PC-3 (cell line): ENCODE measurements at regions of chr1 and their contacts with region 1.

Region 1: DNA sequence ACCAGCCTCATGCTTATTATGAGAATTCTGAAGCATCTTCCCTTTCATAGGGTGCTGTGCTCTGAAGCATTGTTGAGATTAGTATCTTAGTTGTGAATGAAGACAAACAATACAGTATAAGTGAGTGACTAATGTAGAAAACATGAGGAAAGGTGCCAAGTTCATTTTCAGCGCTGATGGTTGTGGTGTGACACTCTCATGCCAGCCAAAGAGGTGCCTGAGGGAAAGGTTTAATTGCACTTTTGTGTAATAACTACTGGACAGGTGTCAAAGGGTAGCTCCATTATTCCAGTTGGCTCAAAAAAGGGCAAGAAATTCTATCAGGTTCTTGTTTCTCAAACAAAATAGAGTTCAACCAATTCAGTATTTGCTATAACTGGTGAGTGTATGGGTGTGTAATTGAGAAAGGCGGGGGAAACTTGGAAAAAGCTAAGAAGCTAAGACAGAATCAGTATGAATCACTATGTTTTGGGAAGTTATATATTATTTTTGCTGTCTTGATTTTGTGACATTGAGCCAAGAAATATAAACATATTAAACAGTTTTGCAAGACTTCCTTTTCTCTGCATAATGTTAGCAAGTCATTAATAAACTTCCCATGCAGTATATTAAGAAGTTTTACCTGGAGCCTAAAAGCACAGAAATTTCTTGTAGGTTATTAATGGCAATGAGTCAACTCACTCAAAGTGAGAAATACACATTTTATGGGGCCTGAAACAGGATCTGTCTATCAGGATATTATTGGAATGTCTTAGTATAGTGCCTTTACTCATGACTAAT is 31.8 kb downstream of the KCNK2 start:
- DNase-seq: peak; percentile 98
- ATAC-seq: peak; percentile 84
- H3K4me3 ChIP-seq: peak overlapping the region; percentile 20; the same call in 1 of the 2 replicates
- H3K27ac ChIP-seq: peak overlapping the region; percentile 74
- H3K4me1 ChIP-seq: peaks cover 25% of the 10 kb centered on the region
- H3K27me3 ChIP-seq: no peaks in the 10 kb centered on the region
- CTCF ChIP-seq: no peak

Region 2: GRCh38 chr1:214823311-214824117 is 290.8 kb before region 1 on chr1:
- CTCF ChIA-PET with region 1: no interaction called
- POLR2A ChIA-PET with region 1: no interaction called
- intact Hi-C with region 1: loop called (anchors 1 kb)
- DNase-seq: no peak
- ATAC-seq: no peak
- H3K4me3 ChIP-seq: no peak overlapping the region
- H3K27ac ChIP-seq: no peak overlapping the region
- H3K4me1 ChIP-seq: peaks cover 7% of the 10 kb centered on the region; the same call in 1 of the 2 replicates
- H3K27me3 ChIP-seq: no peaks in the 10 kb centered on the region
- CTCF ChIP-seq: peak; percentile 41; the same call in 1 of the 2 replicates

Region 3: DNA sequence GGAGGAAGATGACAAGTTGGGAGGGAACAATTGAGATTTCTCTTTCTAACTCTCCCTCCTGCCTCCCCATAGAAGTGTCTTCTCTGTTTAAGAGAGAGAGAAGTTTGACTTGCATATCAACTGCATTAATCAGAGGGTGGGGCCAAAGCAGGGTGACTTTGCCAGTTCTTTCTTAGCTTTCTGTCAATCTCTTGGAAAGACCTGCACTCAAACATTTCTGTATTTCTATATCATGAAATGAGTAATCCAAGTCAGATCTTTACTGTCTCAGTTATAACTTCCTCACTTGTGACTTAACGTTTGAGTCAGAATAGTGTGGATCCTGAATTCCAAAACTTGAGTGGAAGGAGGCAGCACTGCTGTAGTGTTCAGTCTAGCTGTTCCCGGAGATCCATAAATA is 212.6 kb before region 1 on chr1:
- CTCF ChIA-PET with region 1: no interaction called
- POLR2A ChIA-PET with region 1: no interaction called
- intact Hi-C with region 1: loop called (anchors 1 kb)
- DNase-seq: peak; percentile 99
- ATAC-seq: peak; percentile 85
- H3K4me3 ChIP-seq: peak overlapping the region; percentile 48
- H3K27ac ChIP-seq: peak overlapping the region; percentile 88
- H3K4me1 ChIP-seq: peaks cover 44% of the 10 kb centered on the region
- H3K27me3 ChIP-seq: no peaks in the 10 kb centered on the region
- CTCF ChIP-seq: no peak; the same call in 1 of the 2 replicates

Region 4: GRCh38 chr1:215076318-215076717 is 38.0 kb before region 1 on chr1:
- CTCF ChIA-PET with region 1: no interaction called
- POLR2A ChIA-PET with region 1: no interaction called
- intact Hi-C with region 1: no loop called
- DNase-seq: peak; percentile 80
- ATAC-seq: peak; percentile 96
- H3K4me3 ChIP-seq: no peak overlapping the region
- H3K27ac ChIP-seq: no peak overlapping the region
- H3K4me1 ChIP-seq: no peaks in the 10 kb centered on the region
- H3K27me3 ChIP-seq: no peaks in the 10 kb centered on the region
- CTCF ChIP-seq: peak; percentile 91

Region 5: DNA sequence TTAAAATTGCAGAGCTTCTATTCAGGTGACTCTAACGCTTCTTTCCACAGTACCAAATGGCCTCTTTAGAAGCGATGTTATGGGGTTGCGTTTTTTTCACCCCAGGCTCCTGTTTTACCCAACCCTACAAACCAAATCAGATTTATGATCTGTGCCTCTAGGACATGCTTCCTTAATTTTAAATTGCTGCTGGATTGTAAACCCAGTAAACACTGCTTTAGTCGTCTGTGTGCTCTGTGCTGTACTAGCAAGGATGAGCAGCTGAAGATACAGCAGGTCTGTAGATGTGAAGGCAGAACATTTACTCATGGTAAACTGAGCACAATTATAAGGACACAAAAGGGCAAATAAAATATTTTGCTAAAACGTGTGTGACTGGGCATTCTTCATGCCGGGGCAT is 18.8 kb before region 1 on chr1:
- CTCF ChIA-PET with region 1: no interaction called
- POLR2A ChIA-PET with region 1: no interaction called
- intact Hi-C with region 1: no loop called
- DNase-seq: no peak
- ATAC-seq: no peak
- H3K4me3 ChIP-seq: no peak overlapping the region
- H3K27ac ChIP-seq: no peak overlapping the region
- H3K4me1 ChIP-seq: no peaks in the 10 kb centered on the region
- H3K27me3 ChIP-seq: peaks cover 8% of the 10 kb centered on the region; the same call in 1 of the 2 replicates
- CTCF ChIP-seq: no peak

Region 6: DNA sequence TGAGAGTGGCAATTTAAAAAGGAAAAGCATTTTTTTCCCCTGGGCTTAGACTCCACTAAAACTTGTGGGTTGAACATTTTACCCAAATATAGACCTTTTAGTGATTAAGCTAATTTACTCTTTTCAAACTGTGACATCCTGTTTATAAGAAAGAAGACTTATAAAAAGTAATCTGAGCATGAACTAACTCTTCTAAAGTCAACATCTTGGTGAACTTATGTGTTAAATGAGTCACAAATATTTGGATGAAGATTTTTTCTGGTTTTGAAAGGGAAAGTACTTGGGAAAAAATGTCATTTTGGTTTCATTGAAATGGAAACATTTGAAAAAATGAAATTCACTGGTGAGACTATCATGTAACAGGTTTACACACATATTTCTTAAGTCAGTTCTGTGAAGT is 78.0 kb after region 1 on chr1:
- CTCF ChIA-PET with region 1: no interaction called
- POLR2A ChIA-PET with region 1: interaction called, 3 read pairs
- intact Hi-C with region 1: loop called (anchors 1 kb)
- DNase-seq: peak; percentile 85
- ATAC-seq: peak; percentile 60
- H3K4me3 ChIP-seq: no peak overlapping the region
- H3K27ac ChIP-seq: peak overlapping the region; percentile 16
- H3K4me1 ChIP-seq: peaks cover 38% of the 10 kb centered on the region
- H3K27me3 ChIP-seq: no peaks in the 10 kb centered on the region
- CTCF ChIP-seq: no peak

Region 7: GRCh38 chr1:215376544-215377264 is 262.4 kb after region 1 on chr1:
- CTCF ChIA-PET with region 1: no interaction called
- POLR2A ChIA-PET with region 1: no interaction called
- intact Hi-C with region 1: no loop called
- DNase-seq: no peak
- ATAC-seq: no peak
- H3K4me3 ChIP-seq: no peak overlapping the region
- H3K27ac ChIP-seq: no peak overlapping the region
- H3K4me1 ChIP-seq: no peaks in the 10 kb centered on the region
- H3K27me3 ChIP-seq: no peaks in the 10 kb centered on the region
- CTCF ChIP-seq: no peak

Region 8: DNA sequence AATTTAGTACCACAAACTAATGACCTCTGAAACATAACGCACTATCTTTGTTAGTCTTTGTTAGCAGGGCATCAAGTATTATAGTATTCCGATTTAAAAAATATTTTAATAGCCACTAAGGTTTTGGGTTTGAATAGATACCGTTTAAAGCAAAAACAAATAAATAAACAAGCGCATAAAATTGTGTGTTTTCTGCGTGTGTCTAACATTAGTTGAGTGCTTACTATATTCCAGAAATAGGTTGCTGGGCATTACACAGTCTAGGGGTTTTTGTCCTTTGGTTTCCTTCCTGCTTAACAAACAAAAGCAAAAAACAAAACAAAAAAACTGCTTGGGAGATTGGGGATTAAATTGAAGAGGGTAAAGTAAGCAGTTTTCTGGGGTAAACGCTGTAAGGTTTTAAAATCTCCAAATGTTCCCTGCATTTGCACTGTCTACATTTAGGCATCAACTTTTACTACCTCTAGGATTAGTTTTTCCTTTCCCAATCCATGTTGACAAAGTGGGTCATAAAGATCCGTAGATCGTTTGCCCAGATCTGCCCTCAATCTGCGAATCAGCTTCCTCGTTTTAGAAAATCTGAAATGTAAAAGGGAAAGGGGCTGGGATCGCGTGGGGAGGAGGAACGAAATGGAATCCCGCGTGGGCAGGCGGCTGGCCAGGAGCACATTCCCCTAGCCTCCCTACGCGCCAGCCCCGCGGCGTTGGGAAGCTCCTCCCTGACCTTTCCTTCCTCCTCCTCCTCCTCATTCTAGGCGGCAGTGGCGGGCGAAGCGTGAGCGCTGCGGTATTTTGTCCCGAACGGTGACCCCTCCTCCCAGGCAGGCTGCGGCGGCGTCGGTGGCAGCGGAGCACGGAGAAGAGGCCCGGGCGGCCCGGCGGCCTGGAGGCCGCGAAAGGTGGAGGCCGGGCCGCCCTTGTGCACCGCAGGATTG is 452.5 kb after region 1 on chr1 and contains the start of gene KCTD3:
- CTCF ChIA-PET with region 1: no interaction called
- POLR2A ChIA-PET with region 1: no interaction called
- intact Hi-C with region 1: loop called (anchors 2 kb)
- DNase-seq: peak; percentile 89
- ATAC-seq: peak; percentile 33
- H3K4me3 ChIP-seq: peak within 1 kb of the TSS; percentile 81
- H3K27ac ChIP-seq: peak within 1 kb of the TSS; percentile 88
- H3K4me1 ChIP-seq: peaks cover 35% of the 10 kb centered on the region
- H3K27me3 ChIP-seq: no peaks in the 10 kb centered on the region
- CTCF ChIP-seq: no peak
- total RNA-seq, gene KCTD3: 48.4 and 52.8 TPM in 2 replicates

Region 9: GRCh38 chr1:215672482-215672881 is 558.1 kb after region 1 on chr1:
- CTCF ChIA-PET with region 1: no interaction called
- POLR2A ChIA-PET with region 1: no interaction called
- intact Hi-C with region 1: no loop called
- DNase-seq: no peak
- ATAC-seq: no peak
- H3K4me3 ChIP-seq: no peak overlapping the region
- H3K27ac ChIP-seq: no peak overlapping the region
- H3K4me1 ChIP-seq: no peaks in the 10 kb centered on the region
- H3K27me3 ChIP-seq: peaks cover 32% of the 10 kb centered on the region; the same call in 1 of the 2 replicates
- CTCF ChIP-seq: peak; percentile 58; the same call in 1 of the 2 replicates